Common myeloid progenitor, CD34-positive (primary cell): ENCODE measurements at regions of chr19 and their contacts with region 1.

Region 1: GRCh38 chr19:8580710-8581281 is 3.6 kb upstream of the MYO1F start:
- DNase-seq: peak; percentile 77 to 89 (median 82)
- H3K4me3 ChIP-seq: peak overlapping the region in 1 of 7 experiments; percentile 10
- H3K27ac ChIP-seq: no peak overlapping the region
- H3K4me1 ChIP-seq: peaks cover 8 to 46% (median 43%) of the 10 kb centered on the region in 4 experiments
- H3K27me3 ChIP-seq: no peaks in the 10 kb centered on the region

Region 2: GRCh38 chr19:8481616-8482015 is 99.2 kb before region 1 on chr19:
- CTCF ChIA-PET with region 1: interaction called, 59 read pairs
- POLR2A ChIA-PET with region 1: no interaction called
- DNase-seq: no peak
- H3K4me3 ChIP-seq: no peak overlapping the region
- H3K27ac ChIP-seq: no peak overlapping the region
- H3K4me1 ChIP-seq: peaks cover 0 to 15% (median 10%) of the 10 kb centered on the region in 4 experiments
- H3K27me3 ChIP-seq: no peaks in the 10 kb centered on the region

Region 3: GRCh38 chr19:8494158-8494557 is 86.6 kb before region 1 on chr19:
- CTCF ChIA-PET with region 1: interaction called, 59 read pairs
- POLR2A ChIA-PET with region 1: interaction called, 4 read pairs
- DNase-seq: peak; percentile 71 to 93 (median 92)
- H3K4me3 ChIP-seq: peak overlapping the region in 5 of 7 experiments; percentile 37 to 60 (median 46)
- H3K27ac ChIP-seq: peak overlapping the region; percentile 50 to 70
- H3K4me1 ChIP-seq: peaks cover 2 to 77% (median 49%) of the 10 kb centered on the region in 4 experiments
- H3K27me3 ChIP-seq: no peaks in the 10 kb centered on the region

Region 4: DNA sequence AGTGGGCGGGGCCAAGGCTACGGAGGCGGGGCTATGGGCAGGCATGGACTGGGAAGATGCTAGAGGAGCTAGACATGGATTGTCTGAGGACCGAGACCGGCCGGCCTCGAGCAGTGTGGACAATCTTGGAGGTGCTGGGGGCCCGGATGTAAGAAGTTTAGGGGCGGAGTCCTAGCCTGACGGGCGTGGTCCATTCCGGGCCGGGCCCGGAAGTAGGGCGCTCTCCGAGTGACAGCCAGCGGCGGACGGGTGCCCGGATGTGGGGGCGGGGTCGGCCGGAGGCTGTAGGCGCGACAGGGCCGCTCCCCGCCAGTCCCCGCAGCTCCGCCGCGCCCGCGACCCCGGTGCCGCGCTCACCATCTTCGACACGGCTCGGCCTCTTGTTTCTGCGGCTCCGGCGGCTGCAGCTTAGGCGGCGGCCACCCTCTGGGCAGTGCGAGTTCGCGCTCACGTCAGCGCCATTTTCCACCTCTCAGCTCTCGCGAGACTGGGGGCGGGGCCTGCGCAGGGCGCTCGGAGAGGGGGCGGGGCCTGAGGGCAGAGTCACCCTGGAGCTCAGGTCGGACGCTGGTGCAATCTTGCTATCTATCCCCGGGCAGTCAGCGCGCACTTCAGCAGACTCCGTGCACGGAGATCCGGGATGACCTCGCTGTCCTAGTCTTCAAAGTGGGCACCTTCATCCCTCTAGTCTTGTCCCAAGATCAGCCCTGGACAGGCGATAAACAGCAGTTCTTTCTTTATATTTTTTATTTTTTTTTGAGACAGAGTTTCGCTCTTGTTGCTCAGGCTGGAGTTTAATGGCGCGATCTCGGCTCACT is 66.9 kb before region 1 on chr19 and contains the start of gene ZNF414:
- CTCF ChIA-PET with region 1: interaction called, 34 read pairs
- POLR2A ChIA-PET with region 1: interaction called, 8 read pairs
- DNase-seq: peak; percentile 89 to 95 (median 94)
- H3K4me3 ChIP-seq: peak within 1 kb of the TSS; percentile 59 to 94 (median 83)
- H3K27ac ChIP-seq: peak within 1 kb of the TSS; percentile 89 to 94
- H3K4me1 ChIP-seq: peaks cover 6 to 66% (median 43%) of the 10 kb centered on the region in 4 experiments
- H3K27me3 ChIP-seq: no peaks in the 10 kb centered on the region

Region 5: GRCh38 chr19:8569066-8569771 is 11.6 kb before region 1 on chr19:
- CTCF ChIA-PET with region 1: interaction called, 96 read pairs
- POLR2A ChIA-PET with region 1: interaction called, 4 read pairs
- DNase-seq: peak; percentile 85 to 96 (median 95)
- H3K4me3 ChIP-seq: peak overlapping the region in 4 of 7 experiments; percentile 2 to 53 (median 38)
- H3K27ac ChIP-seq: peak overlapping the region in 1 of 2 experiments; percentile 55
- H3K4me1 ChIP-seq: peaks cover 8 to 76% (median 51%) of the 10 kb centered on the region in 4 experiments
- H3K27me3 ChIP-seq: no peaks in the 10 kb centered on the region

Region 6: DNA sequence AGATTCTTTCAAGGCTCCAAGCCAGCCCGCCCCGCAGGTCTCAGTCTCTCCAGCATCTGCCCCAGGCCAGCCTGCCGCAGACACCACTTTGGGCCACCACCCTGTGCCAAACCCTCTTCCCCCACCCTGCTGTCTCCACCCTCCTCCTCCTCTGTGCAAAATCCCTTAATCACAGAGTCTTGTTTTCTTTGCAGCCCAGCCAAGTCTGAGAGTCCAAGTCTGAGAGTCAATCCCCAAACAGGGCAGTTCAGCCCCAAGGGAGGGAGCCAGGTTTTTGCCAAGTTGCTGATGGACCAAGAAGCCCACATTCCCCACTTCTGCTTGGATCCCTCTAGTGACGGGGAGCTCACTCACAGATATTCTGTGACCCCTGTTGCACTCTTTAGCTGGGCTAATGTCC is 26.6 kb after region 1 on chr19:
- CTCF ChIA-PET with region 1: interaction called, 13 read pairs
- POLR2A ChIA-PET with region 1: interaction called, 4 read pairs
- DNase-seq: no peak
- H3K4me3 ChIP-seq: no peak overlapping the region
- H3K27ac ChIP-seq: no peak overlapping the region
- H3K4me1 ChIP-seq: peaks cover 0 to 35% (median 30%) of the 10 kb centered on the region in 4 experiments
- H3K27me3 ChIP-seq: no peaks in the 10 kb centered on the region

Region 7: GRCh38 chr19:8731428-8732169 is 150.8 kb after region 1 on chr19:
- CTCF ChIA-PET with region 1: no interaction called
- POLR2A ChIA-PET with region 1: no interaction called
- DNase-seq: peak in 2 of 3 donors; percentile 33 to 42
- H3K4me3 ChIP-seq: no peak overlapping the region
- H3K27ac ChIP-seq: no peak overlapping the region
- H3K4me1 ChIP-seq: no peaks in the 10 kb centered on the region
- H3K27me3 ChIP-seq: no peaks in the 10 kb centered on the region